K562 (cell line): ENCODE measurements at regions of chr10 and their contacts with region 1.

Region 1: DNA sequence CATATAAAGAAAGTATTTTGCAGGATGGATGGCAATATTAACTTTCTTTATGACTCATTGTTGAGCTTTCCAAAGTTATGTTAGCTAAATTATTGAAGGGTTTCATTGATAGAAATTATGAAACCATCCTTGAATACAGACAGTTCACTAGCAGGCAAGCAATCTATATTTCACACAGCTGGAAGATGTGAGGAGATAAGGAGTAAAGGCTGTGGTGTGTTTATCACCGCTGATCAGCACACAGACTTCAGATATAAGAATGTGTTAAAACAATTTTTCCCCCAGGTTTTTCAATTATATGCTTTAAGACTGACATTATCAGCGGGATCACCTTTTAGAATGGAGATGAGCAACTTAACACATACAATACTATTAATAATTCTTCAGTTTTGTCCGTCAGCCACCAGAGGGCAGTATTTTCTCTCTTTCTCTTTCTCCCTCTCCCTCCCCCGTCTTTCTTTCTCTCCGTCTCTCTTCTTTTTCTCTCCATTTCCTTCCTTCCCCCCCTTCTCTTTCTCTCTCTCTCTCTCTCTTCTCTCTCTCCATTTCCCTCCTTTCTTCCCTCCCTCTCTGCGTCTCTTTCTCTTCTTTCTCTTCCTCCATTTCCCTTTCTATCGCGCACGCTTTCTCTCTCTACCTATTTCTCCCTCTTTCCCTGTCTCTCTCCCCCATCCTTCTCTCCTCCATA is 62.9 kb upstream of the FAM171A1 start:
- DNase-seq: peak; percentile 52 to 83 (median 57)
- ATAC-seq: peak; percentile 84
- H3K4me3 ChIP-seq: no peak overlapping the region
- H3K27ac ChIP-seq: no peak overlapping the region; the same call in 2 of the 3 replicates
- H3K4me1 ChIP-seq: peaks cover 6 to 17% of the 10 kb centered on the region in 2 experiments; a peak in 4 of 5 replicates
- H3K27me3 ChIP-seq: no peaks in the 10 kb centered on the region
- CTCF ChIP-seq: peak; percentile 55 to 83 (median 61); a peak in 5 of 6 replicates
- EP300 ChIP-seq: no peak
- POLR2A ChIP-seq: no peak
- RAD21 ChIP-seq: peak; percentile 90 to 95

Region 2: GRCh38 chr10:15363031-15363430 is 71.0 kb before region 1 on chr10:
- CTCF ChIA-PET with region 1: no interaction called
- POLR2A ChIA-PET with region 1: no interaction called
- in situ Hi-C with region 1: no loop called
- intact Hi-C with region 1: no loop called
- DNase-seq: no peak
- ATAC-seq: no peak
- H3K4me3 ChIP-seq: no peak overlapping the region
- H3K27ac ChIP-seq: no peak overlapping the region
- H3K4me1 ChIP-seq: no peaks in the 10 kb centered on the region; a peak in 1 of 5 replicates
- H3K27me3 ChIP-seq: peaks cover 4 to 8% of the 10 kb centered on the region in 2 experiments; a peak in 1 of 5 replicates
- CTCF ChIP-seq: no peak
- EP300 ChIP-seq: no peak
- POLR2A ChIP-seq: no peak
- RAD21 ChIP-seq: no peak

Region 3: GRCh38 chr10:15461353-15462108 is 27.5 kb after region 1 on chr10:
- CTCF ChIA-PET with region 1: no interaction called
- POLR2A ChIA-PET with region 1: no interaction called
- in situ Hi-C with region 1: no loop called
- intact Hi-C with region 1: loop called (anchors 1 kb)
- DNase-seq: peak; percentile 52 to 85 (median 68)
- ATAC-seq: peak; percentile 100
- H3K4me3 ChIP-seq: no peak overlapping the region
- H3K27ac ChIP-seq: peak overlapping the region; percentile 27; the same call in 1 of the 3 replicates
- H3K4me1 ChIP-seq: peaks cover 0 to 7% of the 10 kb centered on the region in 2 experiments; a peak in 2 of 5 replicates
- H3K27me3 ChIP-seq: no peaks in the 10 kb centered on the region
- CTCF ChIP-seq: peak; percentile 64 to 76 (median 75)
- EP300 ChIP-seq: peak; percentile 47; the same call in 1 of the 2 replicates
- POLR2A ChIP-seq: no peak
- RAD21 ChIP-seq: peak; percentile 64 to 91

Region 4: DNA sequence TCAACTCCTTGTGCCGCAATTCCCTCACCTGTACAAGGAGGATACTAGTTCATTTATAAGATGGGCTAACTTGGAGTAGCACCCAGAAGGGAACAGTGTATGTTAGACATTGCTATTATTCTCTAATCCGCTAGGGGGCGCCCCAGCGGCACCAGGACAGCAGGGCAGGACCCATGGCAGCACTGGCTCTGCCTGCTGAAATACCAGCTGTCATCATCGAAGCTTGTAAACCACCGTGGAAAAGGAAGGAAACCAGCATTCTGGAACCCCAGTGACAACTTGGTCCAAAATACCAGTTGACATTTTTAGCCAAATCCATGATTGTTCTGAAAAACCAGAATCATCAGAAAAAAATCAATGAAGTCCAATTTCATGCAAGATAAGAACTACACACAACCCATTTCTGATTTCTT is 151.3 kb after region 1 on chr10:
- CTCF ChIA-PET with region 1: no interaction called
- POLR2A ChIA-PET with region 1: no interaction called
- in situ Hi-C with region 1: no loop called
- intact Hi-C with region 1: loop called (anchors 5 kb)
- DNase-seq: peak; percentile 69 to 80 (median 71)
- ATAC-seq: peak; percentile 96
- H3K4me3 ChIP-seq: no peak overlapping the region
- H3K27ac ChIP-seq: no peak overlapping the region
- H3K4me1 ChIP-seq: peaks cover 0 to 4% of the 10 kb centered on the region in 2 experiments; a peak in 1 of 5 replicates
- H3K27me3 ChIP-seq: no peaks in the 10 kb centered on the region
- CTCF ChIP-seq: peak; percentile 80 to 96 (median 80)
- EP300 ChIP-seq: no peak
- POLR2A ChIP-seq: no peak
- RAD21 ChIP-seq: peak; percentile 83 to 92

Region 5: DNA sequence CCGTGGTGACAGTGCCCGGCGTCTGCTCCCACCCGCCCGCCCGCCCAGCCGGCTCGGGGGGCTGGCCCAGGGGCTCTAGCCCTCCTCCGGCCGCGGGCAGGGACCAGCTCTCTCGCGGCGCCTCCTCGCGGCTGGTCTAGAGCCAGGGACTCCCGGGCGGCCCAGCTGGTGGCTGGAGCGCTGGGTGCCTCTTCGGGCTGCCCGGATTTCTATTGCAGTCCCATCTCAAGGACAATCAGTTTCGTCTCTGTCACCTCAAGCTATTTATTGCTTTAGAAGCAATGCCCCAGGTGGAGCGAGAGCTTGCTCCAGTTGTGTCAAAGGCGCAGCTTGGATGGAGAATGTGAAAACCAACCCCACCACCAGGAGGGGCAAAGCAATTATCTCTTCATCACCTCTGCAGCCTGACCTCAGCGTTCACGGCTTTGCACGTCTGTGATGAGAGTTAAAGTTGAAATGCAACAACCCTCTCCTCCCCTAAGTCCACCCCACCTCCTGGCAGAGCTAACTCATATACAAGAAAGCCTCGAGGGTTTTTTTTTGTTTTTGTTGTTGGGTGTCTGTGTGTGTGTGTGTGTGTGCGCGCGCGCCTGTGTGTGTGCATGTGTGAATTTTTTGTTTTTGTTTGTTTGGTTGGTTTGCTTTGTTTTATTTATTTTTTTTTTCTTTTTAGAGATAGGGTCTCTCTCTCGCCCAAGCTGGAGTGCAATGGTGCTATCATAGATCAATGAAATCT is 286.1 kb after region 1 on chr10 and contains the start of gene ITGA8:
- CTCF ChIA-PET with region 1: interaction called, 36 read pairs
- POLR2A ChIA-PET with region 1: interaction called, 3 read pairs
- in situ Hi-C with region 1: loop called (anchors 5 kb)
- intact Hi-C with region 1: loop called (anchors 1 kb)
- DNase-seq: no peak
- ATAC-seq: no peak
- H3K4me3 ChIP-seq: no peak within 1 kb of the TSS
- H3K27ac ChIP-seq: no peak within 1 kb of the TSS
- H3K4me1 ChIP-seq: no peaks in the 10 kb centered on the region; a peak in 1 of 5 replicates
- H3K27me3 ChIP-seq: peaks cover 0 to 4% of the 10 kb centered on the region in 2 experiments; a peak in 1 of 5 replicates
- CTCF ChIP-seq: peak in 1 of 3 experiments; percentile 9; a peak in 1 of 6 replicates
- EP300 ChIP-seq: no peak
- POLR2A ChIP-seq: no peak
- RAD21 ChIP-seq: no peak
- polyA plus RNA-seq, gene ITGA8: 0.07 TPM in 1 of 2 experiments, not detected in the other

Region 6: DNA sequence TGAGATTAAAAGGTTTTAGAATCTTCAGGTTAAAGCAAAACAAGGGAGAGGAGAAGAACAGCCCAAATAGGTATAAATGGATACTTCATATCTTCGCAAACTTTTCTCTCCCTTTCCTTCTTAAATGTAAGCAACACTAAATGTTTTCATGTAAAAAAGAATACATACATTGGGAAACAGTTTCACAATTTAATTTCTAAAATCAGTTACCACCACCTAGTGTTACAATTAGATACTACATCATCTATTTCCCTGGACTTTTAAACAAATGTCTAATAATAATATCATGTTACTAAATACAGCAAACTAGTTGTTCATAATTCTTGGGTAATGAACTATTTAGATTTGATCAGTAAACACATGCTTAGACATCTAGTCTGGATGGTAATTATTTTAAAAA is 390.5 kb after region 1 on chr10:
- CTCF ChIA-PET with region 1: interaction called, 7 read pairs
- POLR2A ChIA-PET with region 1: no interaction called
- in situ Hi-C with region 1: loop called (anchors 5 kb)
- intact Hi-C with region 1: no loop called
- DNase-seq: no peak
- ATAC-seq: no peak
- H3K4me3 ChIP-seq: no peak overlapping the region
- H3K27ac ChIP-seq: no peak overlapping the region
- H3K4me1 ChIP-seq: no peaks in the 10 kb centered on the region
- H3K27me3 ChIP-seq: no peaks in the 10 kb centered on the region
- CTCF ChIP-seq: peak in 1 of 3 experiments; percentile 60; a peak in 3 of 6 replicates
- EP300 ChIP-seq: no peak
- POLR2A ChIP-seq: no peak
- RAD21 ChIP-seq: peak; percentile 36 to 64; a peak in 3 of 4 replicates

Region 7: DNA sequence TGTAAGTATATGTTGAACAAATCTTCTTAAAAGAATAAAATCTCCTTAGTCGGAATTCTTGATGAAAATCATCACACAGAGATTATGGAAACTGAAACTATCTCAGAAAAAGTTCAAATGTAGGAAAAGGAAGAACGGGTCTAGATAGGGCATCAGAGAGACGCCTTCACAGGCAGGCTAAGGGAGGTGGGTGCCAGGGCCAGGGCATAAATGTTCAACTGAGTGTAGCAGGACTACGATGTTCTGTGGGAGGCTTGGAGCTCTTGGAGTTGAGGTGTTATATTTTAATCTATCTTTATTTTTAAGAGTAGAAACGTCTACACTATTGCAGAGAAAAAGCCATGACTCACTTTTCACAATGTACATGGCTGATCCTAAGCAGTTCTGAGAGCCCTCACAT is 1282.1 kb after region 1 on chr10:
- CTCF ChIA-PET with region 1: no interaction called
- POLR2A ChIA-PET with region 1: no interaction called
- in situ Hi-C with region 1: no loop called
- intact Hi-C with region 1: no loop called
- DNase-seq: no peak
- ATAC-seq: no peak
- H3K4me3 ChIP-seq: no peak overlapping the region
- H3K27ac ChIP-seq: no peak overlapping the region
- H3K4me1 ChIP-seq: no peaks in the 10 kb centered on the region; a peak in 1 of 5 replicates
- H3K27me3 ChIP-seq: no peaks in the 10 kb centered on the region
- CTCF ChIP-seq: no peak
- EP300 ChIP-seq: no peak
- POLR2A ChIP-seq: no peak
- RAD21 ChIP-seq: no peak